Mammary epithelial cell (primary cell): ENCODE measurements at regions of chr6 and their contacts with region 1.

Region 1: GRCh38 chr6:130760006-130760405 is 67.2 kb upstream of the SMLR1 start:
- DNase-seq: peak; percentile 47
- H3K4me3 ChIP-seq: no peak overlapping the region
- H3K27ac ChIP-seq: no peak overlapping the region
- H3K4me1 ChIP-seq: no peaks in the 10 kb centered on the region
- H3K27me3 ChIP-seq: peaks cover 8% of the 10 kb centered on the region
- CTCF ChIP-seq: peak; percentile 85 to 87

Region 2: GRCh38 chr6:130037207-130037811 is 722.7 kb before region 1 on chr6:
- CTCF ChIA-PET with region 1: no interaction called
- dilution Hi-C with region 1: no loop called
- in situ Hi-C with region 1: no loop called
- intact Hi-C with region 1: loop called (anchors 5 kb)
- DNase-seq: no peak
- H3K4me3 ChIP-seq: no peak overlapping the region
- H3K27ac ChIP-seq: no peak overlapping the region
- H3K4me1 ChIP-seq: no peaks in the 10 kb centered on the region
- H3K27me3 ChIP-seq: no peaks in the 10 kb centered on the region
- CTCF ChIP-seq: peak; percentile 50 to 69

Region 3: DNA sequence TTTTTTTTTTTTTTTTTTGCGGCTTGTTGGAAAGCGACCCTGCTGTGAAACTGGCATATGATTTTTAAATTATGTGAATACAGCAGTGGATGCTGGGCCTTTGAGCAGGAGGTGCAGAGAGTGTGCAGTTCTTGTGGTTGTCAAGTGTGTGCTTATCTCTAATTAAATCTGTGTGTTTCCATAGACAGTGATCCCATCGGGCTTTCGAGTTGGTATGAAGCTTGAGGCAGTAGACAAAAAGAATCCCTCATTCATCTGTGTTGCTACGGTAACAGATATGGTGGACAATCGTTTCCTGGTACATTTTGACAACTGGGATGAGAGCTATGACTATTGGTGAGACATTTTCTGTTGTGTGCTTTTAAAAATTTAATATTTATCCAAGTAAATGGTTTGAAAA is 689.2 kb before region 1 on chr6:
- CTCF ChIA-PET with region 1: no interaction called
- dilution Hi-C with region 1: no loop called
- in situ Hi-C with region 1: loop called in 1 of 2 experiments (anchors 25 kb)
- intact Hi-C with region 1: no loop called
- DNase-seq: no peak
- H3K4me3 ChIP-seq: no peak overlapping the region
- H3K27ac ChIP-seq: no peak overlapping the region
- H3K4me1 ChIP-seq: no peaks in the 10 kb centered on the region
- H3K27me3 ChIP-seq: no peaks in the 10 kb centered on the region
- CTCF ChIP-seq: no peak

Region 4: GRCh38 chr6:130293800-130294199 is 466.2 kb before region 1 on chr6:
- CTCF ChIA-PET with region 1: no interaction called
- dilution Hi-C with region 1: no loop called
- in situ Hi-C with region 1: no loop called
- intact Hi-C with region 1: loop called (anchors 1 kb)
- DNase-seq: peak; percentile 42
- H3K4me3 ChIP-seq: no peak overlapping the region
- H3K27ac ChIP-seq: no peak overlapping the region
- H3K4me1 ChIP-seq: no peaks in the 10 kb centered on the region
- H3K27me3 ChIP-seq: no peaks in the 10 kb centered on the region
- CTCF ChIP-seq: peak; percentile 65 to 76

Region 5: DNA sequence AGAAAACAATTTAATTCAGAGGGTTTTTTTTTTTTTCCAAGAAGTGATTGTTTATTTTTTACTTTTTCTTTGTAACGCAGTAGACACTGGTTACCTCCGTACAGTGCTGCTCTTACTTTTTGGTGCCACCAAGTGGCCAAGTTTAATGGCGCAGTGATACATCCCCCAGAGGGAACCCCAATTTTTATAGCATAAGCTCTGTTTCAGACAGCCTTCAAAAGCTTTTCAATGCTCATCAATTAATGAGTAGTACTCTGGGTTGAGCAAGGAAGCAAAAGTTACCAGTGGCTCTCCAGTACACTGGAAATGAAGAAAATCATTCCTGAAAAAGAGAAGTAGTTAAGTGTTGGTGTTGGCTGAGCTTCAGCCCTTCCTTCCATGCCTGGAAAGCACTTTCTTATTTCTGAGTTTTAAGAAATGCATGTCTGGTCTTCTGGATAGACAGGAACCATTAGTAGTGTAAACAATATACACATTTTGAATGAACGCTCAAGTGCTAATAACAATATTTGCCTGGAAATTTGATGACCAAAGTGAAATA is 61.9 kb before region 1 on chr6:
- CTCF ChIA-PET with region 1: no interaction called
- dilution Hi-C with region 1: no loop called
- in situ Hi-C with region 1: no loop called
- intact Hi-C with region 1: loop called (anchors 1 kb)
- DNase-seq: peak; percentile 41
- H3K4me3 ChIP-seq: no peak overlapping the region
- H3K27ac ChIP-seq: peak overlapping the region; percentile 24
- H3K4me1 ChIP-seq: peaks cover 8% of the 10 kb centered on the region
- H3K27me3 ChIP-seq: no peaks in the 10 kb centered on the region
- CTCF ChIP-seq: peak; percentile 94 to 96

Region 6: GRCh38 chr6:130708338-130708737 is 51.7 kb before region 1 on chr6:
- CTCF ChIA-PET with region 1: no interaction called
- dilution Hi-C with region 1: loop called (anchors 5 kb)
- in situ Hi-C with region 1: no loop called
- intact Hi-C with region 1: no loop called
- DNase-seq: no peak
- H3K4me3 ChIP-seq: no peak overlapping the region
- H3K27ac ChIP-seq: no peak overlapping the region
- H3K4me1 ChIP-seq: no peaks in the 10 kb centered on the region
- H3K27me3 ChIP-seq: no peaks in the 10 kb centered on the region
- CTCF ChIP-seq: no peak

Region 7: GRCh38 chr6:130885392-130886192 is 125.6 kb after region 1 on chr6:
- CTCF ChIA-PET with region 1: no interaction called
- dilution Hi-C with region 1: no loop called
- in situ Hi-C with region 1: no loop called
- intact Hi-C with region 1: no loop called
- DNase-seq: peak; percentile 57
- H3K4me3 ChIP-seq: no peak overlapping the region
- H3K27ac ChIP-seq: no peak overlapping the region
- H3K4me1 ChIP-seq: no peaks in the 10 kb centered on the region
- H3K27me3 ChIP-seq: no peaks in the 10 kb centered on the region
- CTCF ChIP-seq: peak; percentile 80 to 89

Region 8: DNA sequence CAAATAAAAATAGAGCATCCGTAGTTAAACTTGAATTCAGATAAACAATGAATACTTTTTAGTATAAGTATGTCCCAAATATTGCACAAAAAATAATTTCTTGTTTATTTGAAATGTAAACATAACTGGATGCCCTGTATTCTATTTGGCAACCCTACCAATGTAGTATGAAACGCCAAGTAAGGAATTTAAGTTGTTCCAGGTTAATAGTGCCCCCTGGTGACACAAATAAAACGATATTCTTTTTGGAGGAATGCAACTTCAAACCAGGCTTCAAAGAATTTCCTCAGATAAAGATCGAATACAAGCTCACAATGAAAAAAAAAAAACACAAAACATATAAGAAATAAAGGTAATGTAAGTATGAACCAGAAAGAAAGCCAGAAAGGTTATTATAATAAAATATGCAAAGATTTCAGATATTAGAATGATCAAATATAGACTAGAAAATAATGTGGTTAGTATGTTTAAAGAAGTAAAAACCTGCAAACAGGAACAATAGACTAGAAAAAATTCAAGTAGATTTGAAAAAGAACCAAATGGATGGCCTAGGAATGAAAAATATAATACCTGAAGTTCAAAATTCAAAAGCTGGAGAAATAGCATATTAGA is 356.8 kb after region 1 on chr6:
- CTCF ChIA-PET with region 1: no interaction called
- dilution Hi-C with region 1: no loop called
- in situ Hi-C with region 1: no loop called
- intact Hi-C with region 1: no loop called
- DNase-seq: peak; percentile 37
- H3K4me3 ChIP-seq: no peak overlapping the region
- H3K27ac ChIP-seq: no peak overlapping the region
- H3K4me1 ChIP-seq: no peaks in the 10 kb centered on the region
- H3K27me3 ChIP-seq: no peaks in the 10 kb centered on the region
- CTCF ChIP-seq: peak; percentile 42 to 53